ENCODE measurements at regions of chr2 and their contacts with region 1.

Region 1: GRCh38 chr2:54520687-54521086 is 64.6 kb downstream of the SPTBN1 start:
- DNase-seq: no peak
- H3K4me3 ChIP-seq: no peak overlapping the region
- H3K27ac ChIP-seq: no peak overlapping the region
- H3K4me1 ChIP-seq: no peaks in the 10 kb centered on the region
- H3K27me3 ChIP-seq: no peaks in the 10 kb centered on the region
- CTCF ChIP-seq: no peak
- POLR2A ChIP-seq: no peak

Region 2: DNA sequence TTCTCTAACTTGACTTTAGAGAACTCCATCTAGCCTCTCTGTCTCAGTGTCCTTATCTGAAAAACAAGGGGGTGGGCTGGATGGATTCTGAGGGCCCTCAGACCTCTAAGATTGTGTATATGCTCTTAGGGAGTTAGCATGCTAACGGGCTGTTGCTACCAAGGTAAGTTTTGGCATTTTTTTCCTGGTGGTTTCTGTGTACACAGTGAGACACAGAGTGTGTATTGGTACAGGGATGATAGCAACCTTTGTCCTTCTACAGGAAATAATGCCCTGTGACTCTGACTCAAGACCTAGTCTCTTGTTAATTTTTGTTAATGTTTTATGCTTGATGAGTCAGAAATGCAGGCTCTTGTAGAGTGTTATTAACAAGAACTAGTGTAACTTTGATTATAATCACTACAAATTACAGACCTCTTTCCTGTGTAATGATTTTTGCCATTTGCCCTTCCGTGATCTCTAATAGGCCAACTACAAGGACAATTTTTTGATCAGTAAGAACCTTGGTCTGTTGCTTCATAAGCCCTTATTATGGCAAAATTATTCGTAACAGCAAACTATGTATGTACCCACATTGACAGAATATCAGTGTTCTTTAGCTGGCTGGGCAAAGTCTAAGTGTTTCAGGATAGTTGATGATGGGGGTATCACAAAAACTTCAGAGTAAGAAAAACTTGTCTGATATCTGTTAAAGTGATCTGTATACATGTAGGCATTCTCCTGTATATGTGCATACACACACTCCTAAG is 25.2 kb after region 1 on chr2:
- intact Hi-C with region 1: no loop called
- DNase-seq: no peak
- H3K4me3 ChIP-seq: no peak overlapping the region
- H3K27ac ChIP-seq: no peak overlapping the region
- H3K4me1 ChIP-seq: peaks cover 2% of the 10 kb centered on the region
- H3K27me3 ChIP-seq: no peaks in the 10 kb centered on the region
- CTCF ChIP-seq: no peak
- POLR2A ChIP-seq: no peak

Region 3: DNA sequence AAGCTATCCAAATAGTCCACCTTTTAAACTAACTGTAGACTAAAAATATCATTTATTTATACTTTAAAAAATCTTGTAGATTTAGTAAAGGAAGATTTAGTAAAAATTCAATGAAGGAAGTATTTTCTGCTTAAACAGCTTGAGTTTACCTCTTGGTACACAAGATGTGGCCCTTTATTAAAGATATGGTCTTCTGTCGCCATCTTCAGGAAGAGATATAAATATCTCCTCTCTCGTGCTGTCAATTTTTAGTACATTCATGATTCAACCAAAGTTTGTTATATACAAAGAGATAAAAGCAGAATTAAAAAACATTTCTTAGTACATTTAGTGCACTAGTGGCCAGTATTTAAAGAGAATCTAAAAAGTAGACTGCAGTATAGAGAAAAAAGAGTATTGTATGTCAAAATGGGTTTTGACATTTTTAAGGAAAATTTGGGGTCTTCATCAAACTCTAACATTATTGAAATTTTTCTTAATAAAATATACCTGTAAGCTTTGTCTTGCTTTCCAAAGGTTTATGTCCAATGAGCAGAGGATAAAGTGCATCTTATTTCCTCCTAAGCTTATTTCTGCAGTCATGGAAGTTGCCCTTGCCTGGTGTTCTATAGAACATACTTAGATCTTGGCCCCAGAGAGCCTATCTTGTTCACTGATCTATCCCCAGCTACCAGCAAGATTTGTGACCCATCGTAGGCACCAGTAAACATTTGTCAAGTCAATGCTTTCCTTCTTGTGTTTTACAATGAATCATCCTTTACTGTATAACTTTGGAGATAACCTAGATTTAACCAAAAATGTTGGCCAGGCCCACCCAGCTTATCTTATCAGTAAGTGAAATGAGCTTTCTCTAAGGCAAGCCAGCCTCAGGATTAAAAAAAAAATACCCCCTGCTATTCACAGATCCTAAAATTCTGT is 184.3 kb after region 1 on chr2:
- intact Hi-C with region 1: loop called (anchors 2 kb)
- DNase-seq: no peak
- H3K4me3 ChIP-seq: no peak overlapping the region
- H3K27ac ChIP-seq: no peak overlapping the region
- H3K4me1 ChIP-seq: no peaks in the 10 kb centered on the region
- H3K27me3 ChIP-seq: no peaks in the 10 kb centered on the region
- CTCF ChIP-seq: peak in 3 of 4 experiments; percentile 48 to 83 (median 74)
- POLR2A ChIP-seq: no peak

Measured in prostate gland (tissue), 2 donors.